Mucosa of descending colon (tissue), 3 donors: ENCODE measurements at regions of chr3 and their contacts with region 1.

Region 1: DNA sequence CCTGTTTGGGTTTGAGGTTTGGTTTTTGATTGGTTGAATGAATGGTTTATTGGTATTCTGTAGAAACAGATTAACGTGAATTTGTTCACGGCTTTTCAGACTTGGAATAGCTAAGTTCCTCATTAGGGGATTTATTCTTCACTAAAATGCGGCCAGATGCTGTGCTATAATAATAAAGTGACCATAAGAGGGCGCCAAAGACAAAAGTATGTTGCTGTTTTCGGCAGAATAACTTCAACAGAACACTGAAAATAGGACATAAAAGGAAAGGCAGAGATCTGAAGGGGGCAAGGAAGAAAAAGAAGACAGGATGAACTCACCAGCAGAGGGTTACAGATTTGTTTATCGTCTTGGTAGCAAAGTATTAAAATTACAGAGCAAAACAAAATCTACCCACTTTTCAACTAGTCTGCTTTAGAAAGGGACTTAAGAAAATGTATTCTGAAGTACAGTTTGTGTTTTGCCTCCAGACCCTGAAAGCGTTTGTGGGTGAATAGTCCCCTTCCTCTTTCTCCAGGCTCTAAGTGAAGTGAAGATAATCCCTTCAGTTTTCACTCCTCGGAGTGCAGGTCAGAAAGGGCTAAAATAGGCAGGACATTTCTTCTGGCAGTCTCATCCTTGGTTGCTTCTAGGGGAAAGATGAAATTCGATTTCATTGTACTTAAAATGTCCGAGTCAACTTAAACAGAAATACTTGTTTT is 147.6 kb downstream of the IL20RB start:
- DNase-seq: peak in 1 of 3 donors; percentile 48
- ATAC-seq: peak; percentile 34
- H3K4me3 ChIP-seq: no peak overlapping the region
- H3K4me1 ChIP-seq: no peaks in the 10 kb centered on the region
- CTCF ChIP-seq: peak; percentile 19

Region 2: GRCh38 chr3:137039570-137039969 is 65.9 kb before region 1 on chr3:
- intact Hi-C with region 1: no loop called
- DNase-seq: no peak
- ATAC-seq: no peak
- H3K4me3 ChIP-seq: no peak overlapping the region
- H3K4me1 ChIP-seq: no peaks in the 10 kb centered on the region
- CTCF ChIP-seq: no peak

Region 3: DNA sequence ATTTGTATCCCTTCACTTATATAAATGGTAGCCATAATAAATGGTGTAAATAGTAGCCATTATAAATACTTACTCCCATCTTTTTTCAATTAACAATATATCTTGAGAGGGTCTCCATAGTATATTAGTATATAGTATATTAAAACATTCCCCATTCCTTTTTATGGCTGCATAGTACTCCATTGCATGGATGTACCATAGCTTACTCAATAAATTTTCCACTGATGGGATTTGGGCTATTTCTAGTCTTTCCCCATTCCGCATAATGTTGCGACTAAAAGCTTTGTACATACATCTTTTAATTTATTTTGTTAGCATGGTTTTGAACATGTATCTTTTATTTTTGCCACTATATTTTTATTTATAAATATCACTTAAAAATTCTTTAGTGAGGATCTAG is 218.7 kb after region 1 on chr3:
- intact Hi-C with region 1: no loop called
- DNase-seq: no peak
- ATAC-seq: no peak
- H3K4me3 ChIP-seq: no peak overlapping the region
- H3K4me1 ChIP-seq: no peaks in the 10 kb centered on the region
- CTCF ChIP-seq: no peak

Region 4: DNA sequence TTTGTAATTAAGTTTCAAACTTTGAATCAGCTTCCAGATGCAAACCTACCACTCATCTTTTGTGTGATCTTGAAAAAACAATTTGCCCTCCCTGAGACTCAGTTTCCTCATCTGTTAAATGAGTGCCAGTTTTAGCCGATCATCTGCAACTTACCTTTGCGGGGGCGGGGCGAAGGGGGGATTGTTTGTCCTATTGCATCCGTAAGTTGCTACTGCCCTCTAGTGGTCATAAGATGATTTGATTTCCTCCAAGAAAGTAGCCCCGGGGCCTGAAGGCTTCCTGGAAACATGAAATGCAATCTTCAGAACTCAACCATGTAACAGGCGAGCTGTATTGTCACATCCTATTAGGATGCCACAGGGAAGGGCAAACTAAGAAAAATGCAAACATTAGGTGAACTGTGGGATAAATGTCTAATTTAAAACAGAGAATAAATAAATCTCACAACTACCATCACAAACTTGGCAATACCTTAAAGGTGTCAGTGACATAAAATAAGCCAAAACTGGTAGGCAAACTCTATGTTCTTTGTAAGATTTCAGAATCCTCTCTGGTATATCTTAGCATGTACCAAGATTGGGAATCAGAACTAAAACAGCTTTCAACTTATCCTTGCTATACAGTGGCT is 841.0 kb after region 1 on chr3:
- intact Hi-C with region 1: loop called (anchors 5 to 10 kb)
- DNase-seq: peak; percentile 36 to 62 (median 46)
- ATAC-seq: peak; percentile 56
- H3K4me3 ChIP-seq: no peak overlapping the region
- H3K4me1 ChIP-seq: no peaks in the 10 kb centered on the region
- CTCF ChIP-seq: peak; percentile 53